ENCODE measurements at regions of chr6 and their contacts with region 1.

Region 1: DNA sequence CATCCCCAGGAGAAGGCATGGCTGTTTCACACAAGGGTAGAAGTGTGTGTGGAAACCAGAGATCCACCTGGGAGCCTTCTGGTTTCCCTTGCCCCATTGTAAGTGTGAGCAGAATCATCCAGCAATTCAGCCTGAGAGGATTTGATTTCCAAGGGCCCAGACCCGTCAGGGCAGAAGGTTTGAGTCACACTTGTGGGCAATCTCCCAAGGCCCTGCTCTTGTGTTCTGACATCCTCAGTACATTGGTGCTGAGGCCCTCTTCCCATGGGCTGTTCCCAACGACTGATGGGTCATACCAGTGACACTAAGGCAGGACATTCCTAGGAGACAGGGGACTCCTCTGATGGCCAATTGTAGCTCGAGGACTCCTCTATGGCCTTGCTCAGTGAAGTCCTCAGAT is 58.2 kb upstream of the POLR1H start:
- DNase-seq: no peak

Region 2: GRCh38 chr6:29917857-29918256 is 85.0 kb before region 1 on chr6:
- in situ Hi-C with region 1: loop called (anchors 5 kb)
- DNase-seq: peak; percentile 32

Region 3: DNA sequence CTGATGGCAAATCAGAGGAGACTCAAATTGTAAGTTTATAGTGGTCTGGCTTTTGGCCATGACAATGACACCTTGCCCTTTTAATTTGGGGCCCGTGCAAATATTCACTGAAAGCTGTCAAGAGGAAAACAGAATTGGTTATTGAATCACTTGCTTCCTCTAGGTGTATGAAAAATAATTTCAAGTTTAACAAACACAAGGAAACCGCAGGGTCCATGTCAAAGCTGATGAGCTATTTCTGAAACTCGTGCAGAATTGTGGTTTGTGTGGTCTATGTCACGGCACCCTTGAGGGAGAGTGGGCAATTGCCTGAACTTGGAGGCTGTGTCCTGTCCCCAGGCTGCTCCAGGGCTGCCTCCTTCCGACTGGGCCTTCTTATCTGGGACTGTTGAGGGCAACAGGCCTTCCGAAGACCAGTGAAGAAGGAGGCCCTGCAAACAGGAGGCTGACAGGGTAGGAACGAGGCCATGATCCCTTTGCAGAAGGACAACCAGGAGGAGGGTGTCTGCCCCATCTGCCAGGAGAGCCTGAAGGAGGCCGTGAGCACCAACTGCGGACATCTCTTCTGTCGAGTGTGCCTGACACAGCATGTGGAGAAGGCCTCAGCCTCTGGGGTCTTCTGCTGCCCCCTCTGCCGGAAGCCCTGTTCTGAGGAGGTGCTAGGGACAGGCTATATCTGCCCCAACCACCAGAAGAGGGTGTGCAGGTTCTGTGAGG is 133.9 kb after region 1 on chr6:
- in situ Hi-C with region 1: no loop called
- DNase-seq: peak; percentile 34

Region 4: GRCh38 chr6:31087494-31088089 is 1084.7 kb after region 1 on chr6:
- in situ Hi-C with region 1: no loop called
- DNase-seq: peak; percentile 86

Measured in KBM-7 (cell line).